HAP-1 (cell line): ENCODE measurements at regions of chr20 and their contacts with region 1.

Region 1: GRCh38 chr20:33322456-33322855 is 39.4 kb downstream of the BPIFB1 start:
- DNase-seq: no peak
- H3K4me3 ChIP-seq: no peak overlapping the region
- H3K4me1 ChIP-seq: no peaks in the 10 kb centered on the region
- H3K27me3 ChIP-seq: peaks cover 4% of the 10 kb centered on the region; the same call in 1 of the 2 replicates

Region 2: GRCh38 chr20:33262658-33263065 is 59.8 kb before region 1 on chr20:
- in situ Hi-C with region 1: loop called (anchors 10 kb)
- DNase-seq: peak; percentile 46 to 66
- H3K4me3 ChIP-seq: no peak overlapping the region
- H3K4me1 ChIP-seq: no peaks in the 10 kb centered on the region
- H3K27me3 ChIP-seq: peaks cover 5% of the 10 kb centered on the region; the same call in 1 of the 2 replicates